ENCODE measurements at regions of chr1 and their contacts with region 1.

Region 1: GRCh38 chr1:151968058-151968457 is 25.6 kb downstream of the S100A10 start:
- DNase-seq: no peak
- ATAC-seq: peak; percentile 86
- H3K4me3 Mint-ChIP-seq: no peak overlapping the region
- H3K27ac Mint-ChIP-seq: no peak overlapping the region
- H3K4me1 Mint-ChIP-seq: peaks cover 7% of the 10 kb centered on the region
- H3K27me3 Mint-ChIP-seq: peaks cover 10% of the 10 kb centered on the region
- CTCF ChIP-seq: no peak

Region 2: GRCh38 chr1:151888972-151889570 is 79.0 kb before region 1 on chr1:
- CTCF ChIA-PET with region 1: interaction called, 6 read pairs
- POLR2A ChIA-PET with region 1: no interaction called
- intact Hi-C with region 1: loop called (anchors 1 kb)
- DNase-seq: no peak
- ATAC-seq: peak; percentile 58
- H3K4me3 Mint-ChIP-seq: no peak overlapping the region
- H3K27ac Mint-ChIP-seq: no peak overlapping the region
- H3K4me1 Mint-ChIP-seq: peaks cover 9% of the 10 kb centered on the region
- H3K27me3 Mint-ChIP-seq: no peaks in the 10 kb centered on the region
- CTCF ChIP-seq: no peak

Region 3: DNA sequence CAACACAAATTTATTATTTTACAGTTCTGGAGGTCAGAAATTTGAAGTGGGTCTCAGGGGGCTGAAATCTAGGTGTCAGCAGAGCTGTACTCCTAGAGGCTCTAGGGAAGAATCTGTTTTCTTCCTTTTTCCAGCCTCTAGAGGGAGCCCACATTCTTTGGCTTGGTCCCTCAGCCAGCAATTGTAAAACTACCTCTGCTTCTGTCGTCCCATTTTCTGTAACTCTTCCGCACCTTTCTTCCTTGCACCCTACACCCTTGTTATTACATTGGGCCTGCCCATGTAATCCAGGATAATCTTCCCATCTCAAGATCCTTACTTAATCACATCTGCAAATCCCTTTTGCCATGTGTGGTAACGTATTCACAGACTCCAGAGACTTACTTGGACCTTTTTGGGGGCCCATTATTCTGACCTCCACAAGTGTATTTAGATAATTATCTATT is 34.0 kb before region 1 on chr1:
- CTCF ChIA-PET with region 1: interaction called, 23 read pairs
- POLR2A ChIA-PET with region 1: no interaction called
- intact Hi-C with region 1: no loop called
- DNase-seq: no peak
- ATAC-seq: peak; percentile 90
- H3K4me3 Mint-ChIP-seq: no peak overlapping the region
- H3K27ac Mint-ChIP-seq: no peak overlapping the region
- H3K4me1 Mint-ChIP-seq: peaks cover 2% of the 10 kb centered on the region
- H3K27me3 Mint-ChIP-seq: peaks cover 11% of the 10 kb centered on the region
- CTCF ChIP-seq: peak; percentile 86

Region 4: GRCh38 chr1:151984313-151984956 is 16.4 kb after region 1 on chr1:
- CTCF ChIA-PET with region 1: interaction called, 9 read pairs
- POLR2A ChIA-PET with region 1: no interaction called
- intact Hi-C with region 1: loop called (anchors 1 kb)
- DNase-seq: no peak
- ATAC-seq: peak; percentile 18
- H3K4me3 Mint-ChIP-seq: no peak overlapping the region
- H3K27ac Mint-ChIP-seq: no peak overlapping the region
- H3K4me1 Mint-ChIP-seq: peaks cover 23% of the 10 kb centered on the region
- H3K27me3 Mint-ChIP-seq: peaks cover 3% of the 10 kb centered on the region
- CTCF ChIP-seq: no peak

Region 5: GRCh38 chr1:152013664-152014237 is 45.7 kb after region 1 on chr1:
- CTCF ChIA-PET with region 1: interaction called, 14 read pairs
- POLR2A ChIA-PET with region 1: no interaction called
- intact Hi-C with region 1: no loop called
- DNase-seq: no peak
- ATAC-seq: no peak
- H3K4me3 Mint-ChIP-seq: no peak overlapping the region
- H3K27ac Mint-ChIP-seq: no peak overlapping the region
- H3K4me1 Mint-ChIP-seq: no peaks in the 10 kb centered on the region
- H3K27me3 Mint-ChIP-seq: peaks cover 28% of the 10 kb centered on the region
- CTCF ChIP-seq: no peak

Region 6: DNA sequence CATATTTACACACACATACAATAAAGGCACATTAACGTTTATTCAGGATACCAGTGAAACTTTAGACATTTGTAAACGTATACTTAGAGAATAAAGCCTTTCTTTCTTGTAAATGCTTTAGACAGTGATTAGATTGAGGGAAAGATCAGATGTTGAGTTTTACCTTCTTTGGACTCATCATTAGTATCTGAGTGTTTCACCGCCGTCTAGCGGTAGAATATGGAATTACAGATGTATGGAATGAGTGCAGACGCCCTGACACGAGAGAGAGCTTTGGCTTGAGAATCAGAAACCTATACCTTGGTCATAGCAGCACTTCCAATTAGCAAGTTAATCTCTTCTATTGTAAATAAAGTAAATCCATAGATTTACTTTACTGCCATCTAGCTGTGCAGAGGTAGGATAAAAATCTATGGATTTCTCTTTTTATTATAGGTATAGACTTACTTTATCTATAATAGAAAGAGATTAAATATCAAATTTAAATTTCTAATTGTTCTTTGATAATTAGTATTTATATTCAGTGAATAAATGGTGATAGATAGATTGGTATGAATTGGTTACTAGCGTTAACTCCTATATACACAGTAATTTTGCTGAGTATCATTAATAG is 379.2 kb after region 1 on chr1:
- CTCF ChIA-PET with region 1: no interaction called
- POLR2A ChIA-PET with region 1: no interaction called
- intact Hi-C with region 1: loop called (anchors 2 kb)
- DNase-seq: no peak
- ATAC-seq: peak; percentile 47
- H3K4me3 Mint-ChIP-seq: no peak overlapping the region
- H3K27ac Mint-ChIP-seq: no peak overlapping the region
- H3K4me1 Mint-ChIP-seq: no peaks in the 10 kb centered on the region
- H3K27me3 Mint-ChIP-seq: no peaks in the 10 kb centered on the region
- CTCF ChIP-seq: peak; percentile 93

Measured in activated B cell treated with CpG ODN at 0.5 μM for 24 hours (primary cell).